A673 (cell line): ENCODE measurements at regions of chr7 and their contacts with region 1.

Region 1: DNA sequence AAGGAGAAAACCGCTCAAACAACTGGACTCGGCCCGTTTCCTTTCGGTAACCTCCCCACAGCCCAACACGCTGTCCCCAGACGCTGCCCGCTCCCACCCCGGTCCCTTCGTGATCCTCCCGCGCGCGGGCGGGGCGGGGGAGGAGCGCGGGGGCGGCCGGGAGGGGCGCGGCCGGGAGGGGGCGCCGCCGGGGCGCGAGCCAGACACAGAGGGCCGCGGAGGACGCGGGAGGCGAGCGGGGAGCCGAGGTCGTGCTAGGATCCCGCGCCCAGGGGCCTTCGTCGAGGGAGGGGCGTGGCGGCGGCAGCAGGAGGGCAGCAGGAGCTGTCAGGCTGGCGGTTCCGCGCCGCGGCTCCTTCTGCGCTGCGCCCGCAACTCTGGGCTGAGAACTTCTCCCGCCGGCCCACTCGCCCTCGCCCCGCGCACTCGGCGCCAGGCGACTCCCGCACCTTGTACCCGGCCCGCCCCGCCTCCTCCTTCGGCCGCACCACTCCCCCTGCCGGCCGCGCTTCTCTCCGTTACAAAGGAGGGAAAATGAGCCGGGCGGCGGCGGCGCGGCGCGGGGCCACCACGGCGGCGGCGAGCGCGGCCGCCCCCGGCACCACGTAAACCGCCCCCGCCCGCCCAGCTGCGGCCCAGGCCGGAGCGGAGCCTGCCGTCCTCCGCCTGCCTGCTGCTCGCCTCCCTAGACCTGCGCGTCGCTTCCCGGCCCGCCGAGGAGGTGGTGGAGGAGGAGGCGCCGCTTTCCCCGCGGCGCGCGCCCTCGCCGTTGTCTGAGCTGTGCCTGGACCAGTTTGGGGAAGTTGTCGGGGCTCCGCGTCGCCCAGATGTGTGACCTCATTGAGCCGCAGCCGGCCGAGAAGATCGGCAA is at the start of gene CDK14:
- DNase-seq: peak; percentile 86
- H3K4me3 ChIP-seq: peak within 1 kb of the TSS; percentile 69
- H3K27ac ChIP-seq: peak within 1 kb of the TSS; percentile 94
- H3K4me1 ChIP-seq: peaks cover 46% of the 10 kb centered on the region
- H3K27me3 ChIP-seq: no peaks in the 10 kb centered on the region
- CTCF ChIP-seq: peak; percentile 43
- total RNA-seq, gene CDK14: 128 and 131 TPM in 2 replicates

Region 2: GRCh38 chr7:90455163-90456030 is 140.6 kb before region 1 on chr7:
- CTCF ChIA-PET with region 1: interaction called, 10 read pairs
- POLR2A ChIA-PET with region 1: no interaction called
- intact Hi-C with region 1: loop called (anchors 5 kb)
- DNase-seq: peak; percentile 76
- H3K4me3 ChIP-seq: peak overlapping the region; percentile 11
- H3K27ac ChIP-seq: peak overlapping the region; percentile 9
- H3K4me1 ChIP-seq: peaks cover 12% of the 10 kb centered on the region
- H3K27me3 ChIP-seq: no peaks in the 10 kb centered on the region
- CTCF ChIP-seq: peak; percentile 82

Region 3: DNA sequence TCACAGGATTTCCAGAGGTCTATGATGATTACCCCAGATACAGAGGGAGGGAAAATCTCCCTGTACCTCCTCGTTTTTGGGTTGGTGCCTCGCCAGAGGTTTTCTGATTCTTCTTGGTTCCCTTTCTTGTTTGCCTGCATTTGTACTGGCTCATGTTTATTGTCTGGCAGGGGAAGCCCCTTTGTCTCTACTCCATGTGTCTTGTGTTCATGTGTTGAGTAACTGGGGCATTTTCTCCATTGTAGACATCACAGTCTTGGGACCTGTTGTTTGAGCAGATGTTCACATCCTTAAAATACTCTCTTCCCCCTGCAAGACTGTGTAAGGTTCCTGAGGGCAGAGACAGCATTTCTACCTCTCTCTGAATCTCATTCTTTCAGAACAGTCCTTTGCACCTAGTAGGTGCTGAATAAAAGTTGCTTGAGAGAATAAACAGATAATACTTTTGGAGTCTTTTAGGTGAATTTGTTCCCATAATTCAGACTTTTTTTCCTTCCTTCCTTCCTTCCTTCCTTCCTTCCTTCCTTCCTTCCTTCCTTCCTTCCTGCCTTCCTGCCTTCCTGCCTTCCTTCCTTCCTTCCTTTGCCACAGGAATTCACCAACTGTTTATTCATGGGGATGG is 25.2 kb after region 1 on chr7:
- CTCF ChIA-PET with region 1: interaction called, 3 read pairs
- POLR2A ChIA-PET with region 1: interaction called, 3 read pairs
- intact Hi-C with region 1: loop called (anchors 1 kb)
- DNase-seq: peak; percentile 93
- H3K4me3 ChIP-seq: no peak overlapping the region
- H3K27ac ChIP-seq: peak overlapping the region; percentile 97
- H3K4me1 ChIP-seq: peaks cover 97% of the 10 kb centered on the region
- H3K27me3 ChIP-seq: no peaks in the 10 kb centered on the region
- CTCF ChIP-seq: no peak

Region 4: GRCh38 chr7:90945104-90945787 is 349.2 kb after region 1 on chr7:
- CTCF ChIA-PET with region 1: no interaction called
- POLR2A ChIA-PET with region 1: no interaction called
- intact Hi-C with region 1: no loop called
- DNase-seq: no peak
- H3K4me3 ChIP-seq: no peak overlapping the region
- H3K27ac ChIP-seq: no peak overlapping the region
- H3K4me1 ChIP-seq: peaks cover 7% of the 10 kb centered on the region
- H3K27me3 ChIP-seq: no peaks in the 10 kb centered on the region
- CTCF ChIP-seq: no peak